Pancreas (tissue), 10 donors: ENCODE measurements at regions of chr15 and their contacts with region 1.

Region 1: DNA sequence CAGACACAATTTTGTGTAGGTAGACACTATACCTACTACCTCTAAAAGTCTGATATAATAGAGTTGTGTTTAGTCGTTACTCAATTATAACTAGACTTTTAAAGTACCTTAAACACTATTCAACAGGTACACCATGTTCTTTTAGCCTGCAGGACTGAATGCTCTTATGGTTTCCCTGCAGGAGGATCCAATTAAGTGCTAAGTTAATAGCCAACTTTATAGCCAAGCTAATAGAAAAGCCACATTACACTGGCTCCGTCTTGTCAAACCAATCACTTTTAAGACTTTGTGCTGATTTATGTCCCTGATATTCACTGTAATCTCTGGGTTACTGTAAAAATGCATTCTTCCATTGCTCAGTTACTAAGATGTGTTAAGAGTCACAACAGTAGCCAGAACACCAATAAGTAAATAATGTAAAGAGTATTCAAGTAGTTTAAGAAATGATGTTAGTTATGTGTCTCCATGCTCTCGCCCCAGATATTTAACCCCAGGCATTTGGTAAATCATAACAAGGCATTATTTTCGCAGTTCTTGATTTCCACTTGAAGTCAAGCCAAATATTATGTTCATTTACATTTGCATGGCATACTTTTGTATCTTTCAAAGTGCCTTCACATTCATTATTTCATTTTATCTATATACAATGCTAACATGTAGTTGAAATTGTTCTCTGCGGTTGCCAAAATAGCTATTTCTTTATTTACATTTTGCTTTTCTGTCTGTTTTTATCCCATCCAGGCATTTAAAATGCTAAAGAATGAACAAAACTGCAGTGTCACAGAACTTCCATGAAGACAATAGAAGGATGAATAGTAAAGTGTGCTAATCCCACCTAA is 42.7 kb upstream of the AP4E1 start:
- DNase-seq: no peak
- ATAC-seq: no peak
- H3K4me3 ChIP-seq: no peak overlapping the region
- H3K27ac ChIP-seq: no peak overlapping the region
- H3K4me1 ChIP-seq: no peaks in the 10 kb centered on the region
- H3K27me3 ChIP-seq: no peaks in the 10 kb centered on the region
- CTCF ChIP-seq: no peak

Region 2: GRCh38 chr15:50800715-50801114 is 65.0 kb before region 1 on chr15:
- intact Hi-C with region 1: loop called in 1 of 3 experiments (anchors 10 kb)
- DNase-seq: no peak
- ATAC-seq: no peak
- H3K4me3 ChIP-seq: no peak overlapping the region
- H3K27ac ChIP-seq: no peak overlapping the region
- H3K4me1 ChIP-seq: peaks cover 6 to 15% (median 7%) of the 10 kb centered on the region in 3 donors
- H3K27me3 ChIP-seq: no peaks in the 10 kb centered on the region
- CTCF ChIP-seq: no peak